Activated CD4-positive, alpha-beta T cell treated with anti-CD3 and anti-CD28 coated beads for 36 hours (primary cell): ENCODE measurements at regions of chr4 and their contacts with region 1.

Region 1: DNA sequence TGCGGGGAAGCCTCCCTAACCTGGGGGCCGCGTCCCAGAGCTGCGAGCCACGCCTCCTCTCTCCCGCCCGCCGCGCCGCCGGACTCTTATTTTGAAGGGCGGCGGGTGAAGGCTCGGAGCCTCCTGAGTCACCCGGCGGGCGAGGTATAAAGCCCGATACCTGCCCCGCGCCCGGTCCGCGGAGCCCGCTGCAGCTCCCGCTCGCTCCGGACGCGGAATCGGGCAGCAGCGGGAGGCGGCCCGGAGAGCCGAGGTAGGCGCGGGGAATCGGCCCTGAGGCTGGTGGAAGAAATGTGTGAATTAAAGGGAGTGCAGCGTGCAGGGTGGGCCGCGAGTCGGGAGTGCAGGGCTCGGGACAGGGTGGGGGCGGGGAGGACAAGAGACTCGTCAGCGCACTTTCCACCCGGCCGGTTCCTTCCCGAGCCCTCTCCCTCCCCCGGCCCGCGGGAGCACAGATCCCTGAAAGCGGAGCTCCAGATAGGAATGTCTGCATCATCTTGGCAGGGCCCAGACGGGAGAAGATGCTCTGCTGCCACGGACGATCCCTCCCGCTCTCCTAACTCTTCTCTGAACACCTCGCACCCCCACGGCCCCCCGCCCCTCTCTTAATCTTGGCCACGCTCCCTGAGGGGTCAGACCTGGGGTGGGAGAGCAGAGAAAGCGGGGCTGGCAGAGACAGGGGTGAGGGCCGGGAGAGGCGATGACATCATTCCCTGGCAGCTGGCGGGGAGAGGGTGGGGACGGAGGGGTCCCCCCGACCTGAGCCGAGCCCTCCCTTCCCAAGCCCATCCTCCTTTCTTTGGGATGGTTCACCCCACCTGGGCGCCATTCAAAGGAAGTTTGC is 177.9 kb downstream of the CBR4 start:
- DNase-seq: peak; percentile 83
- ATAC-seq: peak; percentile 92
- H3K4me3 Mint-ChIP-seq: peak overlapping the region; percentile 72
- H3K27ac Mint-ChIP-seq: peak overlapping the region; percentile 48
- H3K4me1 Mint-ChIP-seq: peaks cover 15% of the 10 kb centered on the region
- H3K27me3 Mint-ChIP-seq: peaks cover 37% of the 10 kb centered on the region

Region 2: DNA sequence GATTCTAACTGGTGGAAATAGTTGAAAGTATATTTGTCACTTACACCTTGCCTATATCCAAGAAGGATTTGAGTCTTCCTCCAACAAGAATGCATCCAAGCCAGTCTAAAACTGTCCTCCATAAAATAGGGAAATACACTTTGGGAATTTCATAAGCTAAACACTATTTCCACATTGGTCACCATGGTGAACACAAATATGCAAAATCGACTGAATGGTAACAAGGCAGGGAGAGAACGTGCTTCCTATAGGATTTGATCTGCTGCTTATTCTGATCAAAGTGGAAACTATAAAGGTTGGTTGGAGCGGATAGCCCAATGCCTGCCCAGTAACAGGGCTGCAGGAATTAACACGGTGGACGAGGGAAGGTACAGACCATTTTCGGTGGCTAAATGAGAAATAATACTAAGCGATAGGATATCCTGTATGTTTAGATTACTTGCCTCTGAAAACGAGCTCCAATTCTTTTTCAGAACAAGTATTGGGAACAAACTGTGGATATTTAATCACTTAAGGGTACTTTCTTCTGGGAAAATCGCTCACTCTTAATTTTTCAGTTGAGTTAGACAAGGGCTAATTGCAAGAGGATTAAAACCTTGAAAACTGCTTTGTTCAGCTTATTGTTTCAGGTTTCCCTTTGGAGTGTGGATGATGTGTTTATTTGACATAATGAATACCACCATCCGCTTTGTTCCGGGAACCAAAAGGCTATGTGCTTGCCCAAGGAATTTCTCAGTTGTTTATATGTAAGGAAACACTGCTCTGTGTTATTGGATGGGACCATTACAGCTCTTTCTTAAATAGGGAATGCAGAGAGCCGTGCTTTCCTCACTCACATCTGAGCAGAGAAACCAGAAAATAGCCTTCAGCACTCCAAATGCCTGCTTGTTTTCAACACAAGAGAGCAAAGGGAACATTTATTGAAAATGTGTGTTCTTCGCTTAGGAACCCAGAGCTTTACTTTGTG is 16.5 kb before region 1 on chr4:
- CTCF ChIA-PET with region 1: no interaction called
- POLR2A ChIA-PET with region 1: no interaction called
- intact Hi-C with region 1: loop called (anchors 2 kb)
- DNase-seq: no peak
- ATAC-seq: no peak
- H3K4me3 Mint-ChIP-seq: no peak overlapping the region
- H3K27ac Mint-ChIP-seq: no peak overlapping the region
- H3K4me1 Mint-ChIP-seq: peaks cover 12% of the 10 kb centered on the region
- H3K27me3 Mint-ChIP-seq: peaks cover 41% of the 10 kb centered on the region

Region 3: DNA sequence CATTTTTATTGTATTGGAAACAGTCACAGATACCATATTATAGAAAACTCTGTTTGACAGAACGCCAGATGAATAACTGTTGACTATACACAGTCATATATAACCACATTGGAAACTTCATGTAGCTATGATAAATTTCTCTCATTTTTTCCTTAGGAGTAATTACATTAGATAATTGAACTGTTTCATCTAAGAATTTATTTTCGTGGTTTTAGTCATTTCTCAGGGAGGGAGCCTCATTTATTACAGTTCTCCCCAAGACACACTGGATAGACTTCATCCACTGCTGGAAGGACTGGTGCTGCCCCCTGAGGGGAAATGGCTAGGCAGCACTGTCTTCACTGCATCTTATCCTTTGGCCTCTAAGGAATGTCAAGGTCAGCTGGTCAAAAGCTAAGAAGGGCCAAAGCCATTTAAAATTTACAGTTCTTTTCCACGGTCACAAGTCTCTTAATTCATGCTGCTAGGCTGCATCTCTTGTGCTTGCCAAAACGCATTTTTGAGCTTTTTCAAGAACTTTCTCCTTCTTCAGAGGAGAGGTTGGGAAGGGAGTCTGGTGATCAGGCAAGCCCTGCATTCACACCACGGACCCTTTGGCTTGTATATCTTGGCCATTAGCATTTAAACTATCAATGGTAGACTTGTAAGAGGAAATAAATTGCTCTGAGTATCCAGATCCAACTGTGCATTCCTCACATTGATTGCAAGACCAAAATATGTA is 32.8 kb after region 1 on chr4:
- CTCF ChIA-PET with region 1: interaction called, 3 read pairs
- POLR2A ChIA-PET with region 1: interaction called, 3 read pairs
- intact Hi-C with region 1: loop called (anchors 2 to 5 kb)
- DNase-seq: no peak
- ATAC-seq: no peak
- H3K4me3 Mint-ChIP-seq: no peak overlapping the region
- H3K27ac Mint-ChIP-seq: no peak overlapping the region
- H3K4me1 Mint-ChIP-seq: peaks cover 47% of the 10 kb centered on the region
- H3K27me3 Mint-ChIP-seq: peaks cover 6% of the 10 kb centered on the region

Region 4: DNA sequence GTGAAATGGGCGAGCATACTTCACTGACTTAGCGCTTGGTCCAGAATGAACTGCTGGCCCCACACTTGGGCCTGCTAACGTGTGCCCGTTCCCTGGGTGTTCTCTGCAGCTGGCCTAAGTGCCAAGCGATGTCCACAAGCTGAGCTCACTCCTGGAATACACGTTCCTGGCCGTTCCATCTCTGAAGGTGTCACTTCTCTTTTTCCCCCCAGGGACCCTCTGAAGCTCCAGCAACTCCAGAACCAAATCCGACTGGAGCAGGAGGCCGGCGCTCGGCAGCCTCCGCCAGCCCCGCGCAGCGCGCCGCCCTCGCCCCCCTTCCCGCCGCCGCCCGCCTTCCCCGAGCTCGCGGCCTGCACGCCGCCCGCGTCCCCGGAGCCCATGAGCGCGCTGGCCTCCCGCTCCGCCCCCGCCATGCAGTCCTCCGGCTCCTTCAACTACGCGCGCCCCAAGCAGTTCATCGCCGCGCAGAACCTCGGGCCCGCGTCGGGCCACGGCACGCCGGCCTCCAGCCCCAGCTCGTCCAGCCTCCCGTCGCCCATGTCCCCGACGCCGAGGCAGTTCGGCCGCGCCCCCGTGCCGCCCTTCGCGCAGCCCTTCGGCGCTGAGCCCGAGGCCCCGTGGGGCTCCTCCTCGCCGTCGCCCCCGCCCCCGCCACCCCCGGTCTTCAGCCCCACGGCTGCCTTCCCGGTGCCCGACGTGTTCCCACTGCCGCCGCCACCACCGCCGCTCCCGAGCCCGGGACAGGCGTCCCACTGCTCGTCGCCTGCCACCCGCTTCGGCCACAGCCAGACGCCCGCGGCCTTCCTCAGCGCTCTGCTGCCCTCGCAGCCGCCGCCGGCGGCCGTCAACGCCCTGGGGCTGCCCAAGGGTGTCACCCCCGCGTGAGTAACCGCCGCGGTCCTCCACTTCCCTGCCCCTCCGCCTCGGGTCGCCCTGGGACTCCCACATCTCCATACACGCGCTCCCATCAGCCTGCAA is 45.7 kb after region 1 on chr4:
- CTCF ChIA-PET with region 1: interaction called, 4 read pairs
- POLR2A ChIA-PET with region 1: no interaction called
- intact Hi-C with region 1: loop called in 1 of 2 experiments (anchors 5 kb)
- DNase-seq: peak; percentile 59
- ATAC-seq: peak; percentile 61
- H3K4me3 Mint-ChIP-seq: peak overlapping the region; percentile 66
- H3K27ac Mint-ChIP-seq: peak overlapping the region; percentile 44
- H3K4me1 Mint-ChIP-seq: peaks cover 18% of the 10 kb centered on the region
- H3K27me3 Mint-ChIP-seq: peaks cover 48% of the 10 kb centered on the region

Region 5: GRCh38 chr4:168917138-168917779 is 85.1 kb after region 1 on chr4:
- CTCF ChIA-PET with region 1: interaction called, 7 read pairs
- POLR2A ChIA-PET with region 1: no interaction called
- intact Hi-C with region 1: loop called in 1 of 2 experiments (anchors 5 kb)
- DNase-seq: no peak
- ATAC-seq: no peak
- H3K4me3 Mint-ChIP-seq: no peak overlapping the region
- H3K27ac Mint-ChIP-seq: no peak overlapping the region
- H3K4me1 Mint-ChIP-seq: no peaks in the 10 kb centered on the region
- H3K27me3 Mint-ChIP-seq: no peaks in the 10 kb centered on the region

Region 6: DNA sequence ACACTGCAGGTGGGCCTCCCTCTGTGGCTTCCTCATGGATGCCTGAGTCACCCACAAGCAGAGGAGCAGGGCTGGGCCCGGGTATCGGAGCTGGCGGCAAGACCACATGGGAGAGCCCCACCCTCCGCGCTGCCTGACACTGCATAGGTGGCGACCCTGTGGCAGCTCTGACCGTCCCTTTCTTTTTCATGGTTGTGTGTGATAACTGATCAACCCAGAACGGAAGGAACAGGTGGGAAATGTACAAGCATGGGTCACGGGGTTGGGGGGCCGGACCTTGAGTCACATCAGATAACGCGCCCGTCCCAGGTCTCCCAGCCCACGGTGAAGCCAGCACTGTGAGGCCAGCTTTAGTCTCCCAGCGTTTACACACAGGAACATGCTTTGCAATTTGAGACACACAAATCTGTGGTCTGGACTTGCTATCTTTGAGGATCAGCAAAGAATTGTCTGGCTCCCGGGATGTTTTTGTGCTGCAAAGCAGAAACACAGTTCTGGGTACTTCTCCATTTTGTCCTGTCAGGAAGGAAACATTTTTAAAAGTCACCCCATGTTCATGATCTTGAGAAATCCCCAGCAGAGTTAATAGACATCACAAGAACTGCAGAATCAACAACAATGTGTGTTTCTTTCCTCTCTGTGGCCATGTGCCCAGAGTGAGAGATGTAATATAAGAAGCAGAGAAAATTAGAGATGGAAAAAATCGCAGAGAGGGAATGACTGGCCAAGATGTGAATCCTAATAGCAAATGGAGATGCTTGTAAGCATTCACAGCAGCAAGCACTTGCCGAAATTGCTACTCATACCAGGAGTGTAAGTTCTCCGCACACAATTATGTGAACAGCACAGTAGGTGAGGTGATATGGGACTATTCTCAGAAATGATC is 248.0 kb after region 1 on chr4:
- CTCF ChIA-PET with region 1: no interaction called
- POLR2A ChIA-PET with region 1: no interaction called
- intact Hi-C with region 1: no loop called
- DNase-seq: peak; percentile 41
- ATAC-seq: peak; percentile 82
- H3K4me3 Mint-ChIP-seq: peak overlapping the region; percentile 41
- H3K27ac Mint-ChIP-seq: no peak overlapping the region
- H3K4me1 Mint-ChIP-seq: peaks cover 14% of the 10 kb centered on the region
- H3K27me3 Mint-ChIP-seq: peaks cover 14% of the 10 kb centered on the region

Region 7: DNA sequence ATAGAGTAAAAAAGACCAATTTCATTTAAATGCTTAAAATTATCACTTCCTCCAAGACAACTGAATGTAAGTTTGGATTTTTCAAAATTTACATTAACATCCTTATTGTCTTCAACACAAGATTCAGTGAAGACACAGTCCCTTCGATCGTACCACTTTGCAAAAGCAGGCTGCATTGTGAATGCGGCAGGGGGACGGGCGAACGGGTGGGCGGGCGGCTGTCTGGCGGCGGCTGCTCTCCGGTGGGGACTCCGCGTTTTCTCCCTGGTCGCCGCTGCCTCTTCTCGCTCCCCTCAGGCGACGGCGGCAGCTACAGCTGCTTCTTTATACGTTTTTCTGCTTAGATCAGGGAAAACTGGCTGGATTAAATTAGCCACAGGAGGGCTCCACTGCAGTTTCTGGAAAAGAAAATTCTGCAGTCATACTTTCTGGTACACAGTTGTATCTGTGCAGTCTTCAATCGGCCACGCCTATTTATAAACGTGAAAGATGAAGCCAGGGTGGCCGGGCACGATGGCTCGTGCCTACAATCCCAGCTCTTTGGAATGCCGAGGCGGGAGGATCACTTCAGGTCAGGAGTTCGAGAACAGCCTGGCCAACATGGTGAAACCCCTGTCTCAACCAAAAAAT is 959.5 kb after region 1 on chr4:
- CTCF ChIA-PET with region 1: no interaction called
- POLR2A ChIA-PET with region 1: no interaction called
- intact Hi-C with region 1: no loop called
- DNase-seq: peak; percentile 55
- ATAC-seq: peak; percentile 83
- H3K4me3 Mint-ChIP-seq: peak overlapping the region; percentile 1
- H3K27ac Mint-ChIP-seq: peak overlapping the region; percentile 63
- H3K4me1 Mint-ChIP-seq: peaks cover 15% of the 10 kb centered on the region
- H3K27me3 Mint-ChIP-seq: peaks cover 31% of the 10 kb centered on the region